Activated CD4-positive, alpha-beta T cell treated with anti-CD3 and anti-CD28 coated beads for 36 hours (primary cell): ENCODE measurements at regions of chr14 and their contacts with region 1.

Region 1: DNA sequence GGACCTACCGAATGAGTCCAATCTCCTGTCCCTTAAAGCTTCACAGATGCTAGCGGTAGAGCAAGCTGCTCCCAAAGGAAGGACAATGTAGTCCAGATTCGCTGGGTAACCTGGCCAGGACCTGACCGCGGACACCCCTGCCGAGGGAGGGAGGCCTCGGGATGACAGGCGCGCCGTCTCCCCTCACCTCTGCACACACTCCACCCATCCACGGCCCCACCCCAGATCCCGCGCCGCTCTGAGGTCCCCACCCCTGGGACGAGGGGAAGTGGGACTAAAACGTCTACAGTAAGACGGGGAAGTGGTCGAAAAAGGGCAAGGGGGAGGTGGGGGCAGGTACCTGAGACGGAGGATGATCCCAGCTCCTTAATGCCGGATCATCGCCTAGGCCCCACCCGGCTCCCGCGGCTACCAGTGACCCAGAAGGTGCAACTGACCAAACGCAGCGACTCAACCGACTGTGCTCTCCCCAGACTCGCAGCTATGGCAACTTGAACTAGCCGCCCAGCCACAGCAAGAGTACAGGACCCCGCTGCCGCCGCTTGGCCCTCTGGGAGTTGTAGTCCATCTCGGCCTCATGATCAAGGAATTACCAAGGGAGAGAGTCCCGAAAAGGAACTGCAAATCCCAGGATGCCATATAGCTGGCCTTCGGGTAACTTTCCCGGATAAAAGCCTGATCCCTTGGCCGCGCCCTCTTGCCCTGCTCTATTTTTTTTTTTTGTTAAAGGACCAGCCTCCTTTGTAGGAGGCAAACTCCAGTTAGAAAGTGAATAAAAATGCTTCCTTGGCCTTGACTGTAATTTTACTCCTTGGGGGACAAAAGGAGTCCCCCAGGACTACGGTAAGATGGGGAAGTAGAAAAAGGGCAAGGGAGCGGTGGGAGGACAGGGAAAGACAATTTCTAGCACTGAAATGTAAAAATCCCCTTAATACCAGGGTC is at the start of gene CEP128:
- DNase-seq: peak; percentile 93
- ATAC-seq: peak; percentile 85
- H3K4me3 Mint-ChIP-seq: peak within 1 kb of the TSS; percentile 90
- H3K27ac Mint-ChIP-seq: peak within 1 kb of the TSS; percentile 96
- H3K4me1 Mint-ChIP-seq: peaks cover 33% of the 10 kb centered on the region
- H3K27me3 Mint-ChIP-seq: no peaks in the 10 kb centered on the region
- total RNA-seq, gene CEP128: 18.6 to 21.6 TPM

Region 2: GRCh38 chr14:80930836-80931389 is 10.6 kb before region 1 on chr14:
- CTCF ChIA-PET with region 1: interaction called, 4 read pairs
- POLR2A ChIA-PET with region 1: interaction called, 12 read pairs
- intact Hi-C with region 1: loop called (anchors 1 kb)
- DNase-seq: peak; percentile 73
- ATAC-seq: peak; percentile 99
- H3K4me3 Mint-ChIP-seq: peak overlapping the region; percentile 50
- H3K27ac Mint-ChIP-seq: peak overlapping the region; percentile 85
- H3K4me1 Mint-ChIP-seq: peaks cover 33% of the 10 kb centered on the region
- H3K27me3 Mint-ChIP-seq: no peaks in the 10 kb centered on the region

Region 3: DNA sequence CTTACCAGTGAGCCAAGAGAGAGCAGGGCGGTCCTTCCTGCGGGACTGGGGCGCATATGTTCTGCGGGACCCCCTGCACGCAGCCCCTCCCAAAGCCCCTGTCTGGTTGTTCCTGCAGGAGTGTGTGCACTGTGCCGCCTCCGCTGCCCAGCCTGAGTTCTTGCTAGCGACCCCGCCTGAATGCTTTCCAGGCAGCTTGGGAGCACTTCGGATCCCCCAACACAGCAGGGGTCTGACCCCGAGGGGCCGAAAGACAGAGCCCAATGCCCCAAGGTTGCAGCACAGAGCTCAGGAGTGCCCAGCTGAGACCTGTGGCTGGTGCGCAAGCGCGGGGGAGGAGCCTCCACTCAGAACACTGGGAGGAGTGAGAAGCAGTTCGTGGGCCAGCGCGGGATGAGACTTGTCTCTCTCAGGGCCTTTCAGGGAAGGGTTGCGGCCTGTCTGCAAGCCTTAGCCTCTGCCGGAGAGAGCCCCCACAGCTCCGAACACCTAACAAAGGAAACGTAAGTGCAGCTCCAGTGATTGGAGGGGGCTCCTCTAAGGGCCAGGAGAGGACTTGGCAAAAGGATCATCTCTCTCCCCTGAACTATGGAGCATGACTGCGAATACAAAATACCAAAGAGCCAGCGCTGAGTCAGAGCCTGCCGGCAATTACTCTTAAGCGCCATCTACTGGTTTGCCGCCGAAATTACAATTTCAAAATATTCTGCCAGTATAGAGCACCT is 228.8 kb after region 1 on chr14:
- CTCF ChIA-PET with region 1: no interaction called
- POLR2A ChIA-PET with region 1: no interaction called
- intact Hi-C with region 1: loop called in 1 of 2 experiments (anchors 1 kb)
- DNase-seq: peak; percentile 94
- ATAC-seq: peak; percentile 98
- H3K4me3 Mint-ChIP-seq: peak overlapping the region; percentile 83
- H3K27ac Mint-ChIP-seq: peak overlapping the region; percentile 92
- H3K4me1 Mint-ChIP-seq: peaks cover 20% of the 10 kb centered on the region
- H3K27me3 Mint-ChIP-seq: no peaks in the 10 kb centered on the region

Region 4: GRCh38 chr14:81474148-81474492 is 532.6 kb after region 1 on chr14:
- CTCF ChIA-PET with region 1: no interaction called
- POLR2A ChIA-PET with region 1: no interaction called
- intact Hi-C with region 1: loop called (anchors 5 to 10 kb)
- DNase-seq: no peak
- ATAC-seq: peak; percentile 71
- H3K4me3 Mint-ChIP-seq: peak overlapping the region; percentile 36
- H3K27ac Mint-ChIP-seq: peak overlapping the region; percentile 87
- H3K4me1 Mint-ChIP-seq: peaks cover 59% of the 10 kb centered on the region
- H3K27me3 Mint-ChIP-seq: no peaks in the 10 kb centered on the region